ENCODE measurements at regions of chr6 and their contacts with region 1.

Region 1: GRCh38 chr6:26596579-26597388 is at the start of gene ABT1:
- DNase-seq: peak; percentile 98
- ATAC-seq: peak; percentile 89
- H3K4me3 Mint-ChIP-seq: no peak within 1 kb of the TSS
- H3K27ac Mint-ChIP-seq: no peak within 1 kb of the TSS
- H3K4me1 Mint-ChIP-seq: peaks cover 38% of the 10 kb centered on the region
- H3K27me3 Mint-ChIP-seq: peaks cover 28% of the 10 kb centered on the region
- total RNA-seq, gene ABT1: 23.4 to 30.0 TPM

Region 2: DNA sequence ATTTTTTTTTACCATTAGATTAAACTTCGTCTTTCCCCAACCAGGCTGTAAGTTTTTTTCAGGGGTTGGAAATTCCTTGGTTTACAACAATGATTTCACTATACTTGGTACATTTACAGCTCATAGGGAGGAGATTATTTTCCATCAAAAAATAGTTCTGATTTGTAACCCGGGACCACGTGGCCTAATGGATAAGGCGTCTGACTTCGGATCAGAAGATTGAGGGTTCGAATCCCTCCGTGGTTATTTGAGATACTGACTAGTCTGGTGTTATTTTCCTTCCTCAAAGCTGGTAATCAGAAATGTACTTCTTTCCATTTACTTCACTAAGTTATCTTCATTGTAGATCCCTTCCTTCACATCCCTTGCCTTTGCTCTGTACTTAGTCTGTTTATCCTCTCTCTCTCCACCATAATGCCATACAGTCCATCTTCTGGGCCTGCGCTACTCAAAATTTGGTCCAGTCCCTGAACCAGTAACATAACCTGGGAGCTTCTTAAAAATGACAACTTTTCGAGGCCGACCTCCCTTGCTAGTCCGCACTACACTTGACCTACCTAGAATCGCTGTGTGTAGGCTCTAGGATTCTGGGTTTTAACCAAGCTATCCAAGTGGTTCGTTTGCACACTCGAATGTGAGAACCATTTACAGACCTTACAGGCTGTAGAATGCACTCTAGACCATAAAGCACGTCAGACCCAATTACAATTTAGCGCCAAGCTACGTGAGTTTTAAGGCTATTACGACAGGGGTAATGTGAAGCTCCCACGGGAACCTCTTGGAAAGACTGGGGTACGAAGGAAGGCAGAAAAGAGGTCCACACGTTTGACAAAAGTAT is 273.9 kb before region 1 on chr6:
- CTCF ChIA-PET with region 1: interaction called, 16 read pairs
- DNase-seq: peak; percentile 75
- ATAC-seq: peak; percentile 58
- H3K4me3 Mint-ChIP-seq: peak overlapping the region; percentile 89
- H3K27ac Mint-ChIP-seq: peak overlapping the region; percentile 87
- H3K4me1 Mint-ChIP-seq: peaks cover 50% of the 10 kb centered on the region
- H3K27me3 Mint-ChIP-seq: peaks cover 22% of the 10 kb centered on the region

Region 3: GRCh38 chr6:26329763-26330511 is 266.8 kb before region 1 on chr6:
- CTCF ChIA-PET with region 1: interaction called, 17 read pairs
- DNase-seq: peak; percentile 76
- ATAC-seq: peak; percentile 31
- H3K4me3 Mint-ChIP-seq: peak overlapping the region; percentile 76
- H3K27ac Mint-ChIP-seq: peak overlapping the region; percentile 75
- H3K4me1 Mint-ChIP-seq: peaks cover 57% of the 10 kb centered on the region
- H3K27me3 Mint-ChIP-seq: peaks cover 29% of the 10 kb centered on the region

Region 4: GRCh38 chr6:26336355-26337198 is 260.2 kb before region 1 on chr6:
- CTCF ChIA-PET with region 1: interaction called, 38 read pairs
- DNase-seq: no peak
- ATAC-seq: peak; percentile 40
- H3K4me3 Mint-ChIP-seq: peak overlapping the region; percentile 3
- H3K27ac Mint-ChIP-seq: peak overlapping the region; percentile 67
- H3K4me1 Mint-ChIP-seq: peaks cover 48% of the 10 kb centered on the region
- H3K27me3 Mint-ChIP-seq: peaks cover 5% of the 10 kb centered on the region

Region 5: DNA sequence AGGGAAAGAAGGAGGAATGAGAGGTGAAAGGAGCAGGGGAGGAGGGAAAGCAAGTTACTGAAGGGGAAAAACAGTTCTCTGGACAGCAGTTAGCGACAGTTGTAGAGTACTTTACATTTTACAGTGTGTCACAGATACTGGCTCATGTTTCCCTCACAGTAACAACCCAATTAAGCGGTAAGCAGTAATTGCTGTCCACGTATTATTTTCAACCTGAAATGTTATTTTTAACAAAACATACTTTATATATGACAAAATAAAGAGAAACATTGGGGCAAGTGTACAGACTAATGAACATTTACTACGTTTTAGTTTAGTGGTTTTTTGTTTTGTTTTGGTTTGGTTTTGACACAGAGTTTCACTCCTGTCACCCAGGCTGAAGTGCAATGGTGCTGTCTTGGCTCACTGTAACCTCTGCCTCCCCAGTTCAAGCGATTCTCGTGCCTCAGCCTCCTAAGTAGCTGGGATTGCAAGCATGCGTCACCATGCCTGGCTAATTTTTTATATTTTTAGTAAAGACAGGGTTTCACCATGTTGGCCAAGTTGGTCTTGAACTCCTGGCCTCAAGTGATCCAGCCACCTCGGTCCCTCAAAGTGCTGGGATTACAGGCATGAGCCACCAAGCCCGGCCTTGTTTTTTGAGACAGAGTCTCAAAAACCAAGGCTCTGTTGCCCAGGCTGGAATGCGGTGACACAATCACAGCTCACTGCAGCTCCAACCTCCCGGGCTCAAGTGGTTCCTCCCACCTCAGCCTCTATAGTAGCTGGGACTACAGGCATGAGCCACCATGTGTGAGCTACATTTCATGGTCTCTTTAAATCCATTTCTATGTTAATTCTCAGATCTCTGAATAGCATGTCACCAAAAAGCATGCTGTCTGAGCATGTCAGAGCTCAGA is 254.4 kb before region 1 on chr6:
- CTCF ChIA-PET with region 1: interaction called, 38 read pairs
- DNase-seq: peak; percentile 60
- ATAC-seq: peak; percentile 44
- H3K4me3 Mint-ChIP-seq: peak overlapping the region; percentile 84
- H3K27ac Mint-ChIP-seq: peak overlapping the region; percentile 87
- H3K4me1 Mint-ChIP-seq: peaks cover 29% of the 10 kb centered on the region
- H3K27me3 Mint-ChIP-seq: peaks cover 11% of the 10 kb centered on the region

Region 6: GRCh38 chr6:26568601-26569432 is 28.0 kb before region 1 on chr6:
- CTCF ChIA-PET with region 1: interaction called, 136 read pairs
- DNase-seq: peak; percentile 97
- ATAC-seq: peak; percentile 80
- H3K4me3 Mint-ChIP-seq: peak overlapping the region; percentile 98
- H3K27ac Mint-ChIP-seq: peak overlapping the region; percentile 93
- H3K4me1 Mint-ChIP-seq: peaks cover 38% of the 10 kb centered on the region
- H3K27me3 Mint-ChIP-seq: peaks cover 5% of the 10 kb centered on the region

Region 7: GRCh38 chr6:26577720-26578072 is 19.1 kb before region 1 on chr6:
- CTCF ChIA-PET with region 1: interaction called, 136 read pairs
- DNase-seq: no peak
- ATAC-seq: no peak
- H3K4me3 Mint-ChIP-seq: peak overlapping the region; percentile 80
- H3K27ac Mint-ChIP-seq: peak overlapping the region; percentile 68
- H3K4me1 Mint-ChIP-seq: peaks cover 30% of the 10 kb centered on the region
- H3K27me3 Mint-ChIP-seq: peaks cover 16% of the 10 kb centered on the region

Measured in activated CD8-positive, alpha-beta memory T cell treated with anti-CD3 and anti-CD28 coated beads, Interleukin-2, amount 10 ng/mL, durations not matched to agents 7 days and 5 days (primary cell).